ENCODE measurements at regions of chr5 and their contacts with region 1.

Region 1: DNA sequence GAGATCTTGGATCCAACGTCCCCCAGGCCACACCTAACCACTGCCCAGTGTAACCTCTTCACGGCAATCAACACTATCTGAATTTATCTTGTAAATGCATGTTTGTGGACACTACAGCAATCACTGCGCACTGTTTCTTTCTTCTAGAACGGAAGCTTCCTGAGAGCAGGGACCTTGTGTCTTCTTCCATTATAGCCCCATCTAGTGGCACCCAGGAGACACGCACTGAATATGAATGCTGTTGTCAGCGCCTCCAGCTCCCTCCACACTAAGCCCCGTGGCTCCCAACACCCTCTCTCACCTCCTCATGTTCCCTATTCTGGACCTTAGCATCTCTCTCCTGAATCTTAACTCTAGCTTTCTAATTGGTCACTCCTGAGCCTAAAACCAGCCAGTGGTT is 72.7 kb downstream of the SMIM23 start:
- DNase-seq: no peak
- H3K4me3 ChIP-seq: no peak overlapping the region
- H3K27ac ChIP-seq: no peak overlapping the region
- H3K4me1 ChIP-seq: peaks cover 0 to 5% (median 2%) of the 10 kb centered on the region in 4 experiments; a peak in 5 of 7 replicates
- H3K27me3 ChIP-seq: no peaks in the 10 kb centered on the region
- CTCF ChIP-seq: peak; percentile 64 to 89 (median 73)
- EP300 ChIP-seq: no peak
- POLR2A ChIP-seq: peak in 1 of 2 experiments; percentile 10; a peak in 1 of 3 replicates
- RAD21 ChIP-seq: peak; percentile 69 to 70

Region 2: DNA sequence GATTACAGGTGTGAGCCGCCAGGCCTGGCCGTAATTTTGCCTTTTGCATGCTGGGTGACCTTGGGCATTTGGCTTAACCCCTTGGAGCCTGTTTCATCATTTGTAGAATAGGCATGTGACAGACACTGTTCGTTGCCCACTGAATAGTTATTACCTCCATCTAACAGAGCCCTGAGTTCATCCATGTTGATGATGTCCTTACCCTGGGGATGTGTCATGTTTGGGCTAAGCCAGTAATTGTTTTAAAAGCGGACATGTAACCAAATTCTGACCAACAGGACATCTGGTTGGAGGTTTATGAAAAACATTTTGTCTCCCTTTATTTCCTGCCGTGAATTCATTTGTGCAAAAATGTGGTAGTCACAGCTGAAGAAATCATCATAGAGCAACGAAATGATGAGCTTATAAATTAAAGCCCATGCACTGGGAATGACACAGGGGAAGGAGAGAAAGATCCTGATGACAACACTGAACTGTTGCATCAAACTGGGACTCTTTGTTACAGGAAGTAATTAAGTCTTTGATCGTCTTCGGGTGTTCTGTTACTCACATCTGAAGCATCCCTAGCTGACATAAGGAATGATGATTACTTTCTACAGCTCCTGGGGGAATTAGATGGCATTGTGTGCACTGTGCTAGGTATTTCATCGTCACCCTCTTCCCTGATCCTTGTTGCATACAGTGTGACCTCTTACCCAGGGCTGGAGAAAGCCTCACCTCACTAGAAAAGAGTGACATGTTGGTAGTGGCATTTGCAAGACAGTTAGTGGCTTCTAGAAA is 321.0 kb before region 1 on chr5:
- CTCF ChIA-PET with region 1: no interaction called
- POLR2A ChIA-PET with region 1: no interaction called
- DNase-seq: no peak
- H3K4me3 ChIP-seq: no peak overlapping the region
- H3K27ac ChIP-seq: no peak overlapping the region
- H3K4me1 ChIP-seq: peaks cover 2 to 11% (median 8%) of the 10 kb centered on the region in 4 experiments; a peak in 4 of 7 replicates
- H3K27me3 ChIP-seq: peaks cover 0 to 2% (median 0%) of the 10 kb centered on the region in 4 experiments; a peak in 1 of 7 replicates
- CTCF ChIP-seq: no peak
- EP300 ChIP-seq: no peak
- POLR2A ChIP-seq: no peak
- RAD21 ChIP-seq: no peak

Region 3: DNA sequence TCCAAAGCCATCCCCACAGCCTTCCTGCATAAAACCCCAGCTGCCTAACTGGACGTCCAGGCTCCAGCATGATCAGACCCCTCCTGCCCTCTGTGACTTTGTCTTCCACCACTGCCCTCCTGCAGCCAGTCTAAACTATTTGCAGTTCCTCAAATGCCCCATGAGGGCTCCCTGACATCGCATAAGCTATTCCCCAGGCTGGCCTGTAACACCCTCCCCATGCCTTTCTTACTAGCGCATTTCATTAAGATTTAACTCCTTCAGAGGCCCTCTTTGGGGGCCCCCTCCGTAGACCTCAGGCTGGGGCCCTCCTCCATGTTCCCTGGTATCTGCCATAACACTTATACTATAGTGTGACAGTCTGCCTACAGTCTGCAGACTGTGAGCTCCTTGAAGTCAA is 88.2 kb before region 1 on chr5:
- CTCF ChIA-PET with region 1: interaction called, 11 read pairs
- POLR2A ChIA-PET with region 1: no interaction called
- DNase-seq: peak in 1 of 2 experiments; percentile 48
- H3K4me3 ChIP-seq: no peak overlapping the region
- H3K27ac ChIP-seq: no peak overlapping the region
- H3K4me1 ChIP-seq: peaks cover 0 to 4% (median 0%) of the 10 kb centered on the region in 4 experiments; a peak in 2 of 7 replicates
- H3K27me3 ChIP-seq: no peaks in the 10 kb centered on the region
- CTCF ChIP-seq: peak; percentile 26 to 50 (median 49)
- EP300 ChIP-seq: no peak
- POLR2A ChIP-seq: no peak
- RAD21 ChIP-seq: peak; percentile 63 to 73

Region 4: DNA sequence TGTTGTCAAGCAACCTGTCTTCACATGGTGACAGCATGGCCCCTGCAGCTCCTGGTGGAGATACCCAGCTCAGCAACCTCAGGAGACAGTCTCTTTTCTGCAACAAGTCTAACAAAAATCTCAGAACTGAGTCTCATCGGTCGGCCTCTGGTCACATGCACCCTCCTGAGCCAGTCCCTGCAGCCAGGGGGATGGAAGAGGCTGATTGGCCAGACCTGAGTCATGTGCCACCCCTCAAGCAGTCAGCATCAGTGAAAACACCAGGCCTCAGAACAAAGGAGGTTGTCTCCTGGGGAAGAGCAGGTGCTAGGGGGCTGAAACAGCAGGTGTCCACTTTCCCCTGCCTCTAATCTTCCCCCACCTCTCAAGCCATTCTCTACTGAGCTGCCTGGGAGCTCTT is 18.2 kb before region 1 on chr5:
- CTCF ChIA-PET with region 1: interaction called, 81 read pairs
- POLR2A ChIA-PET with region 1: interaction called, 3 read pairs
- DNase-seq: no peak
- H3K4me3 ChIP-seq: no peak overlapping the region
- H3K27ac ChIP-seq: no peak overlapping the region
- H3K4me1 ChIP-seq: no peaks in the 10 kb centered on the region
- H3K27me3 ChIP-seq: no peaks in the 10 kb centered on the region
- CTCF ChIP-seq: no peak
- EP300 ChIP-seq: no peak
- POLR2A ChIP-seq: no peak
- RAD21 ChIP-seq: no peak

Region 5: GRCh38 chr5:171874234-171874633 is 15.9 kb after region 1 on chr5:
- CTCF ChIA-PET with region 1: interaction called, 51 read pairs
- POLR2A ChIA-PET with region 1: interaction called, 4 read pairs
- DNase-seq: no peak
- H3K4me3 ChIP-seq: no peak overlapping the region
- H3K27ac ChIP-seq: no peak overlapping the region
- H3K4me1 ChIP-seq: no peaks in the 10 kb centered on the region
- H3K27me3 ChIP-seq: no peaks in the 10 kb centered on the region
- CTCF ChIP-seq: no peak
- EP300 ChIP-seq: no peak
- POLR2A ChIP-seq: no peak
- RAD21 ChIP-seq: no peak

Region 6: GRCh38 chr5:171907725-171908343 is 49.5 kb after region 1 on chr5:
- CTCF ChIA-PET with region 1: interaction called, 15 read pairs
- POLR2A ChIA-PET with region 1: no interaction called
- DNase-seq: no peak
- H3K4me3 ChIP-seq: no peak overlapping the region
- H3K27ac ChIP-seq: no peak overlapping the region
- H3K4me1 ChIP-seq: peaks cover 0 to 4% (median 2%) of the 10 kb centered on the region in 4 experiments; a peak in 3 of 7 replicates
- H3K27me3 ChIP-seq: no peaks in the 10 kb centered on the region
- CTCF ChIP-seq: peak in 2 of 3 experiments; percentile 60 to 73; a peak in 3 of 4 replicates
- EP300 ChIP-seq: no peak
- POLR2A ChIP-seq: no peak
- RAD21 ChIP-seq: peak; percentile 67 to 74

Region 7: DNA sequence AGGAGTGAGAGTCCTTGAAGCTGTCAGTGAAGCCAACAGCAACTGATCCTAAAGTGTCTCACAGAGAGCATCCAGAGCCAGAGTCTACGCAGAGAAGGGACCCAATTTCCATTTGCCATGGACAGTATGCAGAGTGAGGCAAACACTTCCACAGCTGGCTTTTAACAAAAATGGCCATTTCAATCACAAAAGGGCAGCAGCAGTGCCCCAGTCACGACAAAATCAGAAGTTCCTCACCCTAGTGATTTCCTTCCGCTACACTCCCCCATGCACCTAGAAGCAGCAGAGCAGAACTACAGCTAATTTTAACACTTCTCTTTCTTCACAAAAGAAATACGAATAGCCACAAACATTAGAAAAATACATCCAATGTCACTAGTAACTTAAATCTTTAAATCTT is 120.2 kb after region 1 on chr5:
- CTCF ChIA-PET with region 1: no interaction called
- POLR2A ChIA-PET with region 1: no interaction called
- DNase-seq: no peak
- H3K4me3 ChIP-seq: peak overlapping the region in 3 of 4 experiments; percentile 7 to 45 (median 12); a peak in 4 of 8 replicates
- H3K27ac ChIP-seq: peak overlapping the region; percentile 49; the same call in 1 of the 2 replicates
- H3K4me1 ChIP-seq: peaks cover 14 to 44% (median 43%) of the 10 kb centered on the region in 4 experiments
- H3K27me3 ChIP-seq: no peaks in the 10 kb centered on the region
- CTCF ChIP-seq: no peak
- EP300 ChIP-seq: no peak
- POLR2A ChIP-seq: peak in 1 of 2 experiments; percentile 52; a peak in 1 of 3 replicates
- RAD21 ChIP-seq: no peak

Measured in H1 (cell line).